PC-3 (cell line): ENCODE measurements at regions of chr11 and their contacts with region 1.

Region 1: DNA sequence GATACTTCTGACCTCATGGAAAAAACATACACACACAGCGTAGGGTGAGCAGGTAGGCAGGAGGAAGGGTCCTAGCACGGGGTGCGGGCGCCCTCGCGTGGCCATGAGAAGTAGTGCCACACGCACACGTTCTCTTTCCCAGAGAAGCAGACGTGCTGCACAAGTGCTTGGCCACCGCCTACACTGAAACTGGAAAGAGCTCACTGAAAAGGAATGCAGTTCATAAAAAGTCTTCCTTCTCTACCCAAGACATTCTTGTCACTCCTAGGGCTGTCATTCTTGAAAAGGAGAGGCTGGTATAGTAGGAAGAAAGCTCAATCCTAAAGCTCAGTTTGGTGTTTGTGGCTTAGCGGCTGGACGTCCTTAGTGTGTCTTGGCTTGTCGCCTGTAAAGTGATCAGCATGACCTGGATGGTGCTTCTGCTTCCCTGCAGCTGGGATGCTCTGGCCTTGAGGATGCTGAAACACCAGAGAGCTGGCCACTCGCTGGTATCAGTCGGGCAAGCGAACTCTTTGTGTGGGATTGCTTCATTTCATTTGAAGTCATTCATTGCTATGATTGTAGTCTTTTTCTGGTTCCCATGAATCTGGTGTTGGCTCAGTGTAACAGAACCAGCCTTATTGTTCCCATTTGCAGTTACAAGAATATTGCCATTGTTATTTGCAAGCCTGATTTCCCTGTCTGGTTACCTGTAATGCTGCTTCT is 303.8 kb downstream of the NTM start:
- DNase-seq: peak; percentile 79
- ATAC-seq: peak; percentile 95
- H3K4me3 ChIP-seq: no peak overlapping the region
- H3K27ac ChIP-seq: no peak overlapping the region
- H3K4me1 ChIP-seq: no peaks in the 10 kb centered on the region
- H3K27me3 ChIP-seq: peaks cover 53% of the 10 kb centered on the region
- CTCF ChIP-seq: peak; percentile 96

Region 2: DNA sequence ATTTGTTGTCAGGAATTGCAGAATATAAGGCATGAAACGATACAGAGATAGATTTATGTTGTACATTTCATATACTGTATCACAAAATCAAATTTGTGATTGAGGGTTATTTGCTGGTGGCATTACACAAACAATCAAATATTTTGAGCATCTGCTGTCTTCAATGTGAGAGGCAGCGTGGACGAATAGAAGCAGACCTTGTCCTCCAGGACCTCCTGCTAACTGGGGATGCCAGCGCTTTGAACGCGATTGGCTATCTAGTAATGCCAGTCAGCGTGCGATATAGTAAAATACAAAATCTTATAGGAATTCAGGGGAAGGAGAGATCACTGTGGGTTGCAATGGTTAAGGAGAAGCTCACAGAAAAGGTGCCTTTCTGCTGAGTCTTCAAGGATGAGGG is 757.3 kb before region 1 on chr11:
- CTCF ChIA-PET with region 1: no interaction called
- POLR2A ChIA-PET with region 1: no interaction called
- intact Hi-C with region 1: loop called (anchors 2 kb)
- DNase-seq: no peak
- ATAC-seq: no peak
- H3K4me3 ChIP-seq: peak overlapping the region; percentile 79
- H3K27ac ChIP-seq: no peak overlapping the region
- H3K4me1 ChIP-seq: peaks cover 15% of the 10 kb centered on the region
- H3K27me3 ChIP-seq: peaks cover 22% of the 10 kb centered on the region; the same call in 1 of the 2 replicates
- CTCF ChIP-seq: no peak

Region 3: GRCh38 chr11:131064373-131064991 is 609.7 kb before region 1 on chr11:
- CTCF ChIA-PET with region 1: interaction called, 11 read pairs
- POLR2A ChIA-PET with region 1: no interaction called
- intact Hi-C with region 1: loop called (anchors 1 kb)
- DNase-seq: peak; percentile 82
- ATAC-seq: peak; percentile 93
- H3K4me3 ChIP-seq: no peak overlapping the region
- H3K27ac ChIP-seq: no peak overlapping the region
- H3K4me1 ChIP-seq: no peaks in the 10 kb centered on the region
- H3K27me3 ChIP-seq: peaks cover 94% of the 10 kb centered on the region
- CTCF ChIP-seq: peak; percentile 99

Region 4: GRCh38 chr11:131408025-131408640 is 266.1 kb before region 1 on chr11:
- CTCF ChIA-PET with region 1: no interaction called
- POLR2A ChIA-PET with region 1: no interaction called
- intact Hi-C with region 1: loop called (anchors 5 kb)
- DNase-seq: peak; percentile 65
- ATAC-seq: peak; percentile 53; the same call in 1 of the 2 replicates
- H3K4me3 ChIP-seq: no peak overlapping the region
- H3K27ac ChIP-seq: no peak overlapping the region
- H3K4me1 ChIP-seq: no peaks in the 10 kb centered on the region
- H3K27me3 ChIP-seq: peaks cover 56% of the 10 kb centered on the region
- CTCF ChIP-seq: peak; percentile 80

Region 5: GRCh38 chr11:131899950-131900580 is 225.9 kb after region 1 on chr11:
- CTCF ChIA-PET with region 1: no interaction called
- POLR2A ChIA-PET with region 1: no interaction called
- intact Hi-C with region 1: no loop called
- DNase-seq: no peak
- ATAC-seq: no peak
- H3K4me3 ChIP-seq: no peak overlapping the region
- H3K27ac ChIP-seq: no peak overlapping the region
- H3K4me1 ChIP-seq: peaks cover 20% of the 10 kb centered on the region; the same call in 1 of the 2 replicates
- H3K27me3 ChIP-seq: no peaks in the 10 kb centered on the region
- CTCF ChIP-seq: no peak